Sciatic nerve (tissue), 2 donors: ENCODE measurements at regions of chr12 and their contacts with region 1.

Region 1: DNA sequence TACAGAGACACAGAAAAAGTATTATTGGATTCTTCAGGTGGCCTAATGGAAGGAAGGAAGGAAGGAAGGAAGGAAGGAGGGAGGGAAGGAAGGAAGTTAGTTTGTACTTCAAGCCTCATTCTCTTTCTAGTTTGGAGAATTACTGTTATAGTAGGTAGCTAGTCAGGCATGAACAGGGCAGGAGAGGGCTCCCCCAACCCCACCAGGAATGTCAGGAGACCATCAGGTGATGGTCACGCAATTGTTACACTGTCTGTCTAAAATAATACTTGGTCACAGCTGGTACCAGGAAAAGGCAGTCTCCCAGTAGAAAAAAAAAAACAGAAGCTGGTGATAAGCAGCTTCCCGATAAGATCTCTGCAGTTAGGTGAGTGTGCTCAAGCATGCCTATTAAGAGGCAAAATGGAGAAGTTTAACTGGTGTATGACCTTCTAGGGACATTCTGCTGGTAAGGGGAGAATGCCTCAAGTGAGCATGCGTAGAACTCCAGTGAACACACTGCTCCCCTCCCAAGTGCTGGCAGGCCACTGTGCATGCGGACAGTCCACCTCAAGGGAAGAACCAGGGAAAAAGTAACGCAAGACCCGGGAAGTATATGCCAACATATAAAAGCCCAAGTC is 358.4 kb upstream of the SOX5 start:
- DNase-seq: no peak
- ATAC-seq: no peak

Region 2: GRCh38 chr12:22692964-22693555 is 1614.8 kb before region 1 on chr12:
- intact Hi-C with region 1: loop called (anchors 5 kb)
- DNase-seq: no peak
- ATAC-seq: no peak